B cell (primary cell): ENCODE measurements at regions of chr6 and their contacts with region 1.

Region 1: DNA sequence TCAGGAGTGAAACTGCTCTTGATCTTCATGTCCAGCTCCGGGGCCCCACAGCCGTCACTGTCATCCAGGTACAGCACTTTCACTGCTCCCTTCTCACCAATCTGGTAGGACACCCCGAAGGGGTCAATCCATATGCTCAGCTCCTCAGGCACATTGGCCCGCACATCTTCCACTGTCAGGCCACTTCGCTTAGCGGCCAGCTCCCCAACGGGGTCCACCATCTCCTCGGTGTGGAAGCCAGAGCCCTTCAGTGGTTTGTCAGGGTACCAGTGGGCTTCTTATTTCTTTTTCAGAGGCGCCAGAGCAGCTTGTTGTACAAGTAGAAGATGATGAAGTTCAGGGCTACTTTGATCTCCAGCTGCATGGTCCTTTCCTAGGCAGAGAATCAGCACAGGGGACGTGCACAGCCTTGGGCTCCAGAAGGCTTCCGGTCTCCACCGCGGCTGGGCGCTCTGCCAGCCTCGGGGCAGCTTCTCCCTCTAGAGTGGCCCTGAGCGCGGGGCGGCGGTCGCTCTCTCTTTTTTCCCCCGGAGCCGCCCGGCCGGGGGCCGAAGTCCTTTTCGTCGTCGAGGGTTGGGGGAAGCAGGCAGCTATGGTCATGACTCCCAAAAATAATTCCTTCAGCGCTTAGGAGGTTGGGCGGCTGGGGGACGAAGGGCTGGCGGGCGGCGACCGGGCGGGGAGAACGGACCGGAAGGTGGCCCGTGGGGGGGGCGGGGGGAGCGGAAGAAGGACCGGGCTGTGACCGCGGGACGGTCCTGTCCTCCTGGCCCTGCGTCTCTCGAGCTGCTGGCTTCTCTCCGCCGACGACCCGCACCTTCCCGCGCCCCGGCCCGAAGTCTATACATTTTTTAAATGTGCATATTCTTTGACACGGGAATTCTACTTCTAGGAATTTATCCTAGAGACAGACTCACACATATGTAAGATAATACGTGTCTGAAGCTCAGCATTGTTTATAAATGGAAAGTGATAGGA is 6.5 kb upstream of the ZSCAN9 start:
- DNase-seq: peak; percentile 48
- ATAC-seq: peak; percentile 78
- H3K4me3 ChIP-seq: peak overlapping the region; percentile 32 to 79 (median 64)
- H3K4me3 Mint-ChIP-seq: peak overlapping the region; percentile 93
- H3K27ac ChIP-seq: peak overlapping the region in 1 of 2 donors; percentile 17
- H3K27ac Mint-ChIP-seq: peak overlapping the region; percentile 78
- H3K4me1 ChIP-seq: peaks cover 5 to 6% of the 10 kb centered on the region in 2 donors
- H3K4me1 Mint-ChIP-seq: peaks cover 6% of the 10 kb centered on the region
- H3K27me3 ChIP-seq: peaks cover 0 to 50% (median 35%) of the 10 kb centered on the region in 4 experiments
- H3K27me3 Mint-ChIP-seq: peaks cover 54% of the 10 kb centered on the region
- CTCF ChIP-seq: no peak

Region 2: GRCh38 chr6:28161410-28162079 is 57.0 kb before region 1 on chr6:
- CTCF ChIA-PET with region 1: no interaction called
- POLR2A ChIA-PET with region 1: no interaction called
- intact Hi-C with region 1: loop called (anchors 5 kb)
- DNase-seq: peak; percentile 87
- ATAC-seq: peak; percentile 91
- H3K4me3 ChIP-seq: peak overlapping the region; percentile 34 to 58 (median 47)
- H3K4me3 Mint-ChIP-seq: peak overlapping the region; percentile 84
- H3K27ac ChIP-seq: no peak overlapping the region
- H3K27ac Mint-ChIP-seq: peak overlapping the region; percentile 57
- H3K4me1 ChIP-seq: peaks cover 9 to 12% of the 10 kb centered on the region in 2 donors
- H3K4me1 Mint-ChIP-seq: peaks cover 14% of the 10 kb centered on the region
- H3K27me3 ChIP-seq: no peaks in the 10 kb centered on the region
- H3K27me3 Mint-ChIP-seq: peaks cover 3% of the 10 kb centered on the region
- CTCF ChIP-seq: no peak